Ascending aorta (tissue), 2 donors: ENCODE measurements at regions of chr12 and their contacts with region 1.

Region 1: GRCh38 chr12:54439521-54440255 is 20.6 kb upstream of the ITGA5 start:
- DNase-seq: no peak
- H3K4me3 ChIP-seq: peak overlapping the region in 1 of 2 donors; percentile 6
- H3K27ac ChIP-seq: peak overlapping the region; percentile 52 to 67
- H3K4me1 ChIP-seq: peaks cover 0 to 7% of the 10 kb centered on the region in 2 donors
- H3K27me3 ChIP-seq: no peaks in the 10 kb centered on the region
- CTCF ChIP-seq: peak; percentile 79 to 84 (median 81)

Region 2: GRCh38 chr12:54017878-54018467 is 421.7 kb before region 1 on chr12:
- intact Hi-C with region 1: no loop called
- DNase-seq: peak in 1 of 2 donors; percentile 95
- H3K4me3 ChIP-seq: peak overlapping the region; percentile 47 to 71
- H3K27ac ChIP-seq: peak overlapping the region; percentile 94 to 96
- H3K4me1 ChIP-seq: peaks cover 0 to 10% of the 10 kb centered on the region in 2 donors
- H3K27me3 ChIP-seq: no peaks in the 10 kb centered on the region
- CTCF ChIP-seq: no peak

Region 3: DNA sequence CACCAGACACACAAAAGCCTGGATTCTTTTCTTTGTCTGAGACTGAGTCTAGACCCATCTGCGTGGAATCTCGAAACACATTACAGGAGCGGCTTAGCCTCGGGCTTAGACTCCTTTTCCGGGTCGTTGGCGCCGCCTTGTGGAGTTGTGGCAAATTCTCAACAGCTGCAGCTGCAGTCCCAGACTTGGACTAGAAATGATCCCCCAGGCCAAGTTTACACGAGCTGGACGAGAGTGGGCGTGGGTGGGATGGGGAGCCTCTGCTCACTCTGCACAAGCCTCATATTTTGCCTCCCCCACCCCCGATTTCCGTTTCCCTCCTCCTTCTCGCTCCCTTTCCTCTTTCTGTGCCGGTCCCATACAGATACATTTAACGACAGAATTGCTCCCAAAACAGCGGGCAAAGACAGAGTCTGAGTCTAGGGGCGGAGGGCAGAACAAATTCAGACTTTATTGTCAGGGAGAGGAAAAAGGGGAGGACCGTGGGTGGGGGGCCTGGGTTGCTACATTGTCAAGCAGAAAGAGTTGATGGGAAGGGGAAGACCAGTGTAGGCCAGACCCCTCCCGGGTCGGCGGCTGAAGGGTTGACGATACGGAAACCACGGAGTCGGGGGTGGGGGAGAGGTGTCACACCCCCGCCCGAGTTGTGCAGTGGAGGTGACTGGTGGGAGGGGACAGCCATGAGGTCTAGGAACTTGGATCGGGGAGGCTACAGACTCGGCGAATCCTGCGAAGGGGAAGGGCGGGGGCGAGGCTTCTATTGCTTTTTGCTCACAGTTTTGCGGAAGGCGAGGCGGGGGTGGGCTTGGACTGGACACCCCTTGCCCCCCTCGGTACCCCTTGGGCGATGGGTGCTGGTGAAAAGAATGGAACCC is 70.7 kb before region 1 on chr12:
- intact Hi-C with region 1: loop called (anchors 2 kb)
- DNase-seq: peak; percentile 62 to 94
- H3K4me3 ChIP-seq: peak overlapping the region; percentile 43 to 65
- H3K27ac ChIP-seq: peak overlapping the region; percentile 39 to 60
- H3K4me1 ChIP-seq: peaks cover 4 to 22% of the 10 kb centered on the region in 2 donors
- H3K27me3 ChIP-seq: no peaks in the 10 kb centered on the region
- CTCF ChIP-seq: peak; percentile 82 to 90 (median 86)

Region 4: DNA sequence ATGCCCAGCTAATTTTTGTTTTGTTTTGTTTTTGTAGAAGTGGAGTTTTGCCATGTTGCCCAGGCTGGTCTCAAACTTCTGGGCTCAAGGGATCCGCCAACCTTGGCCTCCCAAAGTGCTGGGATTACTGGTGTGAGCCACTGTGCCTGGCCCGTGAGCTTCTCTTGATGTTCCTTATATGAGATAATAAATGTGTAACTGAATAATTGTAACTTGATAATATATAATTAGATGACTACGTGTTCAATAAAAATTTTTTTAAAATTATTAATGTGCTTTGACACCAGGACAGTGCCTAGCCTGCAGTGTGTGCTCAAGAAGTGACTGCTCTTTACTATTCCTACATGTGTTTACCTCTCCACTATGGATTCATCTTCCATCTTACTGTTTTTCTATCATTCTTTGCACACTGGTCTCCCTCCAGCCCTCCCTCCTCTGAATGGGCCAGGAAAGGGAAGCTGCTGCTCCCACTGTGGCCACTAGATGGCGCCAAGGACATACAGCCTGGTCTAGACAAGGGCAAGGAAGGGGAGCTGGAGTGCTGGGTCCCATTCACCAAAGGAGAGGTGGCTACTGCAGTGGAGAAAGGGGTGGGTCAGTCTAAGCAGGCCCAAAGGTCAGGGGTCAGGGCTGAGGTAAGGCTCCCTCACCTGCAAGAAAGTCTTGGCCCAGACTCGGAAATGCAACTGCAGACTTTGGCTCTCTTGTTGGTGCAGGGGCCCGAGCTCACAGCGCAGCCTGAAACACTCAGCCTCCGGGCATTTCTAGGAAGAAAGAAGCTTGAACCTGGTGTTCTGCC is 40.5 kb before region 1 on chr12:
- intact Hi-C with region 1: loop called (anchors 1 kb)
- DNase-seq: peak in 1 of 2 donors; percentile 95
- H3K4me3 ChIP-seq: no peak overlapping the region
- H3K27ac ChIP-seq: peak overlapping the region in 1 of 2 donors; percentile 27
- H3K4me1 ChIP-seq: no peaks in the 10 kb centered on the region
- H3K27me3 ChIP-seq: no peaks in the 10 kb centered on the region
- CTCF ChIP-seq: peak; percentile 93 to 96 (median 95)

Region 5: DNA sequence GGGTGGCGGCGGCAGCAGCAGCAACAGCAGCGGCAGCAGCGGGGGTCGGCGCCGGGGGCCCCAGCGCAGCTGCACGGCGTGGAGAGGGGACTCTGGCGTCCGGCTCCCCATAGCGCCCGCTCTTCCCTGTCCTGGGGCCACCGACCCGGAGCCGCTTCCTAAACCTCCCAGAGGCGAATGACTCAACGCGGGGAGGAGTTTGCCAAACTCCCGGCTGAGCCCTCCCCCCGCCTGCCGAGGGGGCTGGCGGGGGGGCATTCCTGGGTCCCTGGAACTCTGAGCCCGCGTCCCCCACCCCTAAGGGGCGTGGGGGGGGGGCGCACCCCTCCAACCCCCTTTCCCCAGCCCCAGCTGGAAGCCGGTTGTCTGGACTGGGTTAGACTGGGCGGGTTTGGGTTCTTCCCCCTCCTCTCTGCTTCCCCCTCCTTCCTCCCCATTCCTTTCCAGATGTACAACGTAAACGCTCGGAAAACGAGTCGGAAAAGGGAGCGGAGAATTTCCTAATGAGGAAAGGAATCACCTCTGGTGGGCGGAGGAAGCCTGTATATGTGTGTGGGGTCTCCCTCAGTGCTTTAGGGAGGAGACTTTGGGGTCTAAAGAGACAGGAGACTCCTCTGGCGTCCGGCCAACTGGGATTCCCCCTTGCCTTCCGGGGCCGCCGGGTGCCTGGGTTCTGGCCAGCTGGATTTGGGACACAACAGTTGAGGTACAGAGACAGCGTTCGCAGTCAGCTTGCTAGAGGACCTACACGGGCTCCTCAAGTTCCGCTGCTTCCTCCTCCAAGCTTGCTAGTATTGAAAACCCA is 20.4 kb before region 1 on chr12 and contains the start of gene ITGA5:
- intact Hi-C with region 1: loop called (anchors 1 kb)
- DNase-seq: peak in 1 of 2 donors; percentile 93
- H3K4me3 ChIP-seq: peak within 1 kb of the TSS; percentile 70 to 98
- H3K27ac ChIP-seq: peak within 1 kb of the TSS; percentile 97
- H3K4me1 ChIP-seq: peaks cover 0 to 34% of the 10 kb centered on the region in 2 donors
- H3K27me3 ChIP-seq: no peaks in the 10 kb centered on the region
- CTCF ChIP-seq: no peak
- total RNA-seq, gene ITGA5: 973 TPM

Region 6: GRCh38 chr12:54526812-54527630 is 87.3 kb after region 1 on chr12:
- intact Hi-C with region 1: no loop called
- DNase-seq: peak in 1 of 2 donors; percentile 67
- H3K4me3 ChIP-seq: no peak overlapping the region
- H3K27ac ChIP-seq: no peak overlapping the region
- H3K4me1 ChIP-seq: no peaks in the 10 kb centered on the region
- H3K27me3 ChIP-seq: no peaks in the 10 kb centered on the region
- CTCF ChIP-seq: peak; percentile 38 to 62 (median 51)

Region 7: GRCh38 chr12:55847603-55848291 is 1408.1 kb after region 1 on chr12:
- intact Hi-C with region 1: loop called (anchors 10 kb)
- DNase-seq: peak; percentile 93 to 99
- H3K4me3 ChIP-seq: peak overlapping the region in 1 of 2 donors; percentile 26
- H3K27ac ChIP-seq: peak overlapping the region; percentile 99
- H3K4me1 ChIP-seq: peaks cover 4 to 51% of the 10 kb centered on the region in 2 donors
- H3K27me3 ChIP-seq: no peaks in the 10 kb centered on the region
- CTCF ChIP-seq: no peak